ENCODE measurements at regions of chr3 and their contacts with region 1.

Region 1: DNA sequence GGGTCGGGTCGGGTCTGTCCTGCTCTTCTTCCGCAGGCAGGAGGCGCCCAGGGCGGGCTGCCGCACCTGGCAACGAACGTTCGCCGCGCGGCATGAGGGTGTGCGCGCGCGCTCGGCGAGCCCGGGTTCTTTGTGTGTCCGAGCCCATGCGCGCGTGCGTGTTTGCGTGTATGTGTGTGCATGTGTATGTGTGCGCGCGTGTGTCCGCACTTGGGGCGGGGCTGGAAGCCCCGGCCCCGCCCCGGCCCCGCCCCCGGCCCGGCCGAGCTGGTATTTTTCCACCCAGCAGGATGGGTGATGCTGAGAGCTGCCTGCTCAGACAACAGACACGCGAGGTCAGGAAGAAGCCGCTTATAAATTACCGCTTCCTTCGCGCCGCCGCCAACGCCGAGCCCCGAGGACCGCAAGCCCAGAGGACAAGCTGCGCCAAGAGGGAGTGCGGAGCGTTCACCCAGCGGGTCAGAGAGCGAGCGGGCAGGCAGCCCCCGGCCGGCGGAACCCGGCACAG is at the start of gene SLC6A6:
- DNase-seq: peak; percentile 97
- ATAC-seq: peak; percentile 80
- H3K4me3 Mint-ChIP-seq: peak within 1 kb of the TSS; percentile 94
- H3K27ac Mint-ChIP-seq: peak within 1 kb of the TSS; percentile 95
- H3K4me1 Mint-ChIP-seq: peaks cover 43% of the 10 kb centered on the region
- H3K27me3 Mint-ChIP-seq: no peaks in the 10 kb centered on the region
- total RNA-seq, gene SLC6A6: 51.7 to 54.2 TPM

Region 2: DNA sequence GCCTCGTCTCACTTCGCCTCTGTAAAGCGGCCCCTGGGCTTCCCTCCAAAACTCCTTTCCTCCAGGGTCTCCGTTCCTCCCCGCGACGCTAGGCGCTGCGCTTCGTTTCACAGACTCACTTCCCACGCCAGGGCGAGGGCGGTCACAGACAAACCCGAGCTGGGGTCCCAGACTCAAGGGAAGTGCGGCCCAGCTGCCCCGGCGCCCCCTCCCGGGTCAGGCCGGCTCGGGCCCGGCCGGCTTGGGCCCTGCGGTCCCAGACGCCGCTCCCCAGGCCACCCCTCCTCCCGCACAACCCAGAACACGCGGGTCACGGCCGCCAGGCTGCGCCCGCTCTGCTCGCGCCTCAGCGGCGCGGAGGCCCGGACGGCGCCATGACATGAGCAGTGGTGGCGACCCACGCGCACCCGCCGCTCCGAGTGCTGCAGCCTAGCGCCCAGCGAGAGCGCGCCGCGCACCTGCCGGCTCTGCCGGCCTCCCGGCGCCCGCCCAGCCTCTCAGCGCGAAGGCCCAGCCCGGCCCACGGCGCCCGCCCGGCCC is 982.8 kb before region 1 on chr3:
- CTCF ChIA-PET with region 1: no interaction called
- POLR2A ChIA-PET with region 1: no interaction called
- intact Hi-C with region 1: loop called in 1 of 2 experiments (anchors 10 kb)
- DNase-seq: peak; percentile 79
- ATAC-seq: peak; percentile 30
- H3K4me3 Mint-ChIP-seq: peak overlapping the region; percentile 77
- H3K27ac Mint-ChIP-seq: peak overlapping the region; percentile 95
- H3K4me1 Mint-ChIP-seq: peaks cover 58% of the 10 kb centered on the region
- H3K27me3 Mint-ChIP-seq: no peaks in the 10 kb centered on the region

Region 3: DNA sequence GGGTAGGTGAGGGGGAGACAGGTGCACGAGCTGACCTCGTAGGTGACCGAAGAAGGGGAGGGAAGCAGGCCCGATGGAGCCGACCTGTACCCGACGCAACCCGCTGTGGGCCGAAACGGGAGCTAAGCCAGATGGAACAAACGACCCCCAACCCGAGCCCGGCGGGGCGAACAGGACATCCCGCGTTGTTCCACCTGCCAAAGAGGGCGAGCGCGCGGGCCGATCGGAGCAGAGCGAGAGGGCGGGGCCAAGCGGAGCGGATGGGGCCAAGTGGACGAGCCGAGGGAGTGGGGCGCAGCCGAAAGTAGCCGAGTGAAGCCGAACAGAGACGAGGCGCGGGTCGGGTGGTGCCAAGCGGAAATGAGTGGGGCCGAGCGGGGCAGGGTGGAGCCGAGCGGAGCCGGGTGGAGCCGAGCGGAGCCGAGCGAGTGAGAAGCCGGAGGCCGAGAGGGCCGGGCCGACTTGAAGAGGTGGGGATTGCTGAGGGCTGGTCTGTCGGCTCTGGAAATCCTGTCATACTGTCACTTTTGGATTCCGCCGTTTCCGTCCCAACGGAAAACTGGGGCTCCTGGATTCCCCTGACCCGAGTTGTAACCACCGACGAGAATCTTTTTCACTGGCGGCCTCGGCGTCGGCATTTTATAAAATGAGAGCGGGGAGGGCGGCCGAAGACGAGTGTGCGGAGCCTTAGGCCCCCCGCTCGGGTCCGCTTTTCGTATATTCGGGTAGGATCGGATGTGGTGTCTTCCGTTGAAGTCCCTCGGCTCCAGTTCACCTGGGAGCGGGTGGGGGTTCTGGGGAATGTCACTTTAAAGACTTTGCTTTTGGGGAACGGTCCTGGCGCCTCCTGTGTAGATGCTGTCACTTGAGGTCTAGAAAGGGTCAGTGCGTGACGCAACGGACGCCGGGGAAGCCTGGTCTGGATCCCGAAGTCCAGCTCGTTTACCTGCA is 506.9 kb before region 1 on chr3:
- CTCF ChIA-PET with region 1: no interaction called
- POLR2A ChIA-PET with region 1: no interaction called
- intact Hi-C with region 1: loop called in 1 of 2 experiments (anchors 1 kb)
- DNase-seq: peak; percentile 99
- ATAC-seq: peak; percentile 100
- H3K4me3 Mint-ChIP-seq: peak overlapping the region; percentile 83
- H3K27ac Mint-ChIP-seq: peak overlapping the region; percentile 82
- H3K4me1 Mint-ChIP-seq: peaks cover 19% of the 10 kb centered on the region
- H3K27me3 Mint-ChIP-seq: no peaks in the 10 kb centered on the region

Region 4: DNA sequence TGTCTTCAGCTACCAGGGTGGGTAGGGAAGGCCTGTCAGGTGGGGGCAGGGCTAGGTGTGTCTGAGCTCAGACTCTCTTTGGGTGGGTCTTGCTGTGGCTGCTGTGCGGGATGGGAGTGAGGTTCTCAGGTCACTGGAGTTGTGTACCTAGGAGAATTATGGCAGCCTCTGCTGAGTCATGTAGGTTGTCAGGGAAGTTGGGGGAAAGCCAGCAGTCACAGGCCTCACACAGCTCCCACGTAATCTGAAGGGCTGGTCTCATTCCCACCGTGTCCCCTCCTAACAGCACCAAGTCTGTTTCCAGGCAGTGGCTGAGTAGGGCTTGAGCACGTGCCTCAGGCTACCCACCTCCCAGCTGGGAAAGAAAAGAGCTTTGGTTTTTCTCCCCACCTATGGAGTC is 344.7 kb before region 1 on chr3:
- CTCF ChIA-PET with region 1: no interaction called
- POLR2A ChIA-PET with region 1: no interaction called
- intact Hi-C with region 1: no loop called
- DNase-seq: no peak
- ATAC-seq: no peak
- H3K4me3 Mint-ChIP-seq: no peak overlapping the region
- H3K27ac Mint-ChIP-seq: no peak overlapping the region
- H3K4me1 Mint-ChIP-seq: no peaks in the 10 kb centered on the region
- H3K27me3 Mint-ChIP-seq: no peaks in the 10 kb centered on the region

Region 5: GRCh38 chr3:14253022-14253706 is 149.2 kb before region 1 on chr3:
- CTCF ChIA-PET with region 1: no interaction called
- POLR2A ChIA-PET with region 1: no interaction called
- intact Hi-C with region 1: no loop called
- DNase-seq: no peak
- ATAC-seq: no peak
- H3K4me3 Mint-ChIP-seq: no peak overlapping the region
- H3K27ac Mint-ChIP-seq: no peak overlapping the region
- H3K4me1 Mint-ChIP-seq: no peaks in the 10 kb centered on the region
- H3K27me3 Mint-ChIP-seq: no peaks in the 10 kb centered on the region

Region 6: GRCh38 chr3:14431892-14432834 is 29.8 kb after region 1 on chr3:
- CTCF ChIA-PET with region 1: interaction called, 5 read pairs
- POLR2A ChIA-PET with region 1: interaction called, 16 read pairs
- intact Hi-C with region 1: loop called (anchors 1 kb)
- DNase-seq: peak; percentile 97
- ATAC-seq: peak; percentile 88
- H3K4me3 Mint-ChIP-seq: peak overlapping the region; percentile 63
- H3K27ac Mint-ChIP-seq: peak overlapping the region; percentile 96
- H3K4me1 Mint-ChIP-seq: peaks cover 86% of the 10 kb centered on the region
- H3K27me3 Mint-ChIP-seq: no peaks in the 10 kb centered on the region

Region 7: GRCh38 chr3:14467814-14468620 is 65.7 kb after region 1 on chr3:
- CTCF ChIA-PET with region 1: interaction called, 8 read pairs
- POLR2A ChIA-PET with region 1: no interaction called
- intact Hi-C with region 1: loop called in 1 of 2 experiments (anchors 1 kb)
- DNase-seq: peak; percentile 58
- ATAC-seq: peak; percentile 28
- H3K4me3 Mint-ChIP-seq: no peak overlapping the region
- H3K27ac Mint-ChIP-seq: no peak overlapping the region
- H3K4me1 Mint-ChIP-seq: peaks cover 6% of the 10 kb centered on the region
- H3K27me3 Mint-ChIP-seq: no peaks in the 10 kb centered on the region

Region 8: DNA sequence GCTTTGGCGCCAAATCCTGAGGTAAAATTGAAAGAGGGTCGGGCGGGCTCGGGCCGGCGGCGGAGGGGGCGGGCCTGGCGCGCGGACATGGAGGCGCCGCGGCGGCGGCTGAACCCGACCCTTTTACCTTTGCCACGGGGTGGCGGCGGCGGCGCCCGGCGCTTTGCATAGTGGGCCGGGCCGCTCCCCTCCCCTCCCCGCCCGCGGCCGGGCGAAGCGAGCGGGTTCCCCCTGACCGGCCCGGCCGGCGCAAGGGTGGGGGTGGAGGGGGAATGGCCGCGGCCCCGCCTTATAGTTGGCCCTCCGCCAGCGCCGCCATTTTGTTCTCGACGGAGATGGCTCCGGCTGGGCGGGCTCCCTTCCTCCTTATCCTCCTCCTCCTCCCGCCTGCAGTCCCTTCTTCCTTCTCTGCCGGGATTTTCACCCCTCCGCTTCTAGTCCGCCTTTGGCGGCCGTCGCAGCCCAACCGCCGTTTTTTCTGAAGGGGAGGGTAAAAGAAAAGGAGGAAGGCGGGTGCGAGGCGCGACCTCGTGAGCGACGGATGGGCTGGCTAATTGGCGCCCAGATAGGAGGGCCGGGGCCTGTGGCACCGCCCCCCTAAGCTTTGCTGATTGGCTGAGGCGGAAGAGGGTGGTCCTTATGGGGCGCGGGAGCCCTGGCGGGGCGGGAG is 545.7 kb after region 1 on chr3:
- CTCF ChIA-PET with region 1: no interaction called
- POLR2A ChIA-PET with region 1: no interaction called
- intact Hi-C with region 1: loop called in 1 of 2 experiments (anchors 1 kb)
- DNase-seq: peak; percentile 97
- ATAC-seq: peak; percentile 97
- H3K4me3 Mint-ChIP-seq: peak overlapping the region; percentile 91
- H3K27ac Mint-ChIP-seq: peak overlapping the region; percentile 98
- H3K4me1 Mint-ChIP-seq: peaks cover 49% of the 10 kb centered on the region
- H3K27me3 Mint-ChIP-seq: no peaks in the 10 kb centered on the region

Region 9: DNA sequence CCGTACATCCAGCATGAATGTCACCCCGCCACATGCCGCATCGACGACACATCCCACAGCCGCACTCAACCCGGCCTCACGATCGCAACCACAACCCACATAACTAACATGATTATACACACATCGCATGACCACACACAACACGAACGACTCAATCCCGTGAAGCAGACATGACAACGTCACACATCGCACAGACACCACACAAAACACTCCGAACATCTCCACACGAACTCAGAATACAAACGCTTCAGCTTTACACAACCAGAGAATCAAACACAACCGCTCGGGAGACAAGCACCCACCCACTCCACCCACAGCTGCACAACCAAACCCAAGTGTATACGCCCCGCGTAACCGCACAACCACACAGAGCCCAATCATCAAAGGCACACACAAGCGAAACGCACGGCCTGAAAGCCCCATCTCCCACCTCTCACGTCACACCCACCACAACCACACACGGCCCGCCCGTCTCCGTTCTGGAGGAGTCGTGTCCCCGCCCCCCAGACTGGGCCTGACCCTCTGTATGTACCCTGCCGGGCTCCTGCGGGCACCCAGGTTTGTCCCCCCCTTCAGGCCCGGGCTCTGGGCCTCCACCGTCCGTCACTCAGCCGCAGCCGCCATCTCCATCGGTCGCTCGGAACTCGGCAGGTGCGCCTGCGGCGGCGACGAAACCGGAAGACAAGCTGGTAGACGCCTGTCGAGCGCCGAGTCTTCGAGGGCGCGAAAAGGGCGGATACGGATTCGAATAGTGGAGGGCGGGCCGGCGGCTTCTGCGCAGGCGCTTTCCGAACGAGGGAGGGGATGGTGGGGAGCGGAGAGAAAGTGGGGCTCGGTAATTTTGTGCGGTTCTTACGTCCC is 696.4 kb after region 1 on chr3 and contains the start of gene RBSN:
- CTCF ChIA-PET with region 1: no interaction called
- POLR2A ChIA-PET with region 1: interaction called, 5 read pairs
- intact Hi-C with region 1: loop called in 1 of 2 experiments (anchors 1 kb)
- DNase-seq: peak; percentile 98
- ATAC-seq: peak; percentile 85
- H3K4me3 Mint-ChIP-seq: peak within 1 kb of the TSS; percentile 85
- H3K27ac Mint-ChIP-seq: peak within 1 kb of the TSS; percentile 91
- H3K4me1 Mint-ChIP-seq: peaks cover 18% of the 10 kb centered on the region
- H3K27me3 Mint-ChIP-seq: peaks cover 2% of the 10 kb centered on the region
- total RNA-seq, gene RBSN: 13.5 to 15.0 TPM

Measured in activated CD4-positive, alpha-beta T cell treated with anti-CD3 and anti-CD28 coated beads for 36 hours (primary cell).